ENCODE measurements at regions of chr3 and their contacts with region 1.

Region 1: GRCh38 chr3:32570421-32571191 is at the start of gene DYNC1LI1:
- DNase-seq: peak; percentile 94
- H3K4me3 Mint-ChIP-seq: peak within 1 kb of the TSS; percentile 90
- H3K27ac Mint-ChIP-seq: peak within 1 kb of the TSS; percentile 88
- H3K4me1 Mint-ChIP-seq: no peaks in the 10 kb centered on the region
- H3K27me3 Mint-ChIP-seq: no peaks in the 10 kb centered on the region
- CTCF ChIP-seq: no peak
- total RNA-seq, gene DYNC1LI1: 39.1 and 47.6 TPM in 2 replicates

Region 2: GRCh38 chr3:32480604-32481003 is 90.0 kb before region 1 on chr3:
- CTCF ChIA-PET with region 1: no interaction called
- POLR2A ChIA-PET with region 1: no interaction called
- intact Hi-C with region 1: no loop called
- DNase-seq: no peak
- H3K4me3 Mint-ChIP-seq: no peak overlapping the region
- H3K27ac Mint-ChIP-seq: peak overlapping the region; percentile 75
- H3K4me1 Mint-ChIP-seq: peaks cover 6% of the 10 kb centered on the region
- H3K27me3 Mint-ChIP-seq: no peaks in the 10 kb centered on the region
- CTCF ChIP-seq: no peak

Region 3: DNA sequence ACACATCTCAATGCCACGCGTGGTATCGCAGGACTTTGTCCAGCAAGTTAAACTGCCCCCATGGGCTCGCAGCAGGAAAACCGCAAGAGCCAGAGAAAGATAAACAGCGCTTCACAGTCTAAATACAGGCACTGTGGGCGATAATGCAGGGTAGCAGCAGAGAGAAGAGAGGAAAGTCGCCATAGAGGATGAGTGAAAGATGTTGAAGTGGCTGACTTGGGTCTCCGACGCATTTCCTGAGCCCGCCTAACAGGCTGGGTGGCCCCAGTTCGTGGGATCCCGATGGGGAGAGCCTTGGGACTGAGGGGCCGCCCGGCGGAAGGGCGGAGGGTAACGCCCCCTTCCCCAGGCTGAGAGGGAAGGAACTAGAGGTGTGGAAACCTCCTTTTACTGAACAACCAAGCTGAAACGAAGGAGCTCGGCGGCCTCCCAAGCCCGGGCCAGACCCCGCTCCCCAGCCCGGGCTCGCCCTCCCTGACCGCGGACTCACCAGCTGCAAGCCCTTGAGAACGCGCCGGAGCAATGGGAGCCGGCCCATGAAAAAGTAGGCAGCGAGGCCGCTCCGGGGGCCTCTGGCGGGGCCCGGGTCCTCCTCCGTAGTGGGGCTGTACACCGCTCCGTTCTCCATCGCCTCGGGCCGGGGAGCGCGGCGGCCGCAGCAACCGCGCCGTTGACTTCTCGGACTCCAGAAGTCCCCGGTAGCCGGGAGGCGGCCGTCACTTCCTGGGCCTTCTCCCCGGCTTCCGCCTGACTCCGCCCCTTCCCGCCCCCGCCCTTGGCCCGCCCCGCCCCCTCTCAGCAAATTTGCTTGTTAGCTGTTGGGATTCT is 68.3 kb before region 1 on chr3 and contains the start of gene CMTM6:
- CTCF ChIA-PET with region 1: no interaction called
- POLR2A ChIA-PET with region 1: interaction called, 10 read pairs
- intact Hi-C with region 1: no loop called
- DNase-seq: peak; percentile 82
- H3K4me3 Mint-ChIP-seq: peak within 1 kb of the TSS; percentile 95
- H3K27ac Mint-ChIP-seq: peak within 1 kb of the TSS; percentile 67
- H3K4me1 Mint-ChIP-seq: peaks cover 14% of the 10 kb centered on the region
- H3K27me3 Mint-ChIP-seq: no peaks in the 10 kb centered on the region
- CTCF ChIP-seq: no peak
- total RNA-seq, gene CMTM6: 27.2 and 32.2 TPM in 2 replicates

Region 4: DNA sequence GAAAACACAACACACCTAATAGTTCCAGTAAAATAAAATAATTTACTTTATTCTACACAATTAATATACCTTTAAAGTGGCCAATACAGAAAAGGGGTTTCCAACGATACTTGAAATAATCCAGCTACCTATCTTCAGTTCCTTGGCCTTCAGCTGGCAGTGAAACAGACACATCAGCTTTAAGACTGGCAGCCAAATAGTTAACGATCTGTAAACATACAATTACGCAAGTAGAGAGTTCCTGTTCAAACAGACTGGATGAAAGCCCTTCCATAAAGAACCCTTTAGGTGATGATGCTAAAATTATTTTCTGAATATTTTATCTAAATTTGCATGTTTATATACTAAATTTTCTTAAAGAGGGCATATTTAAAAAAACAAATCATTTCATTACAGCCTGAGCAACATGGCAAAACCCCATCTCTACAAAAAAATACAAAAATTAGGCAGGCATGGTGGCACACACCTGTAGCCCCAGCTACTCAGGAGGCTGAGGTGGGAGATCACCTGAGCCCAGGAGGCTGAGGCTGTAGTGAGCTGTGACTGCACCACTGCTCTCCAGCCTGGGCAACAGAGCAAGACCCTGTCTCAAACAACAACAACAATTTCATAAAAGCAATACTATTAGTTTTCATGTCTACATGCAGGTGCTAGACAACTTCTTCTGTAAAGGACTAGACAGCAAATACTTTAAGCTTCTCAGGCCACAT is 12.8 kb before region 1 on chr3:
- CTCF ChIA-PET with region 1: no interaction called
- POLR2A ChIA-PET with region 1: interaction called, 28 read pairs
- intact Hi-C with region 1: no loop called
- DNase-seq: peak; percentile 10
- H3K4me3 Mint-ChIP-seq: no peak overlapping the region
- H3K27ac Mint-ChIP-seq: no peak overlapping the region
- H3K4me1 Mint-ChIP-seq: peaks cover 6% of the 10 kb centered on the region
- H3K27me3 Mint-ChIP-seq: no peaks in the 10 kb centered on the region
- CTCF ChIP-seq: no peak

Region 5: GRCh38 chr3:32882603-32883025 is 312.0 kb after region 1 on chr3:
- CTCF ChIA-PET with region 1: no interaction called
- POLR2A ChIA-PET with region 1: no interaction called
- intact Hi-C with region 1: no loop called
- DNase-seq: no peak
- H3K4me3 Mint-ChIP-seq: no peak overlapping the region
- H3K27ac Mint-ChIP-seq: no peak overlapping the region
- H3K4me1 Mint-ChIP-seq: no peaks in the 10 kb centered on the region
- H3K27me3 Mint-ChIP-seq: no peaks in the 10 kb centered on the region
- CTCF ChIP-seq: no peak

Region 6: GRCh38 chr3:33035596-33035995 is 465.0 kb after region 1 on chr3:
- CTCF ChIA-PET with region 1: no interaction called
- POLR2A ChIA-PET with region 1: no interaction called
- intact Hi-C with region 1: no loop called
- DNase-seq: peak; percentile 37
- H3K4me3 Mint-ChIP-seq: no peak overlapping the region
- H3K27ac Mint-ChIP-seq: peak overlapping the region; percentile 2
- H3K4me1 Mint-ChIP-seq: peaks cover 16% of the 10 kb centered on the region
- H3K27me3 Mint-ChIP-seq: no peaks in the 10 kb centered on the region
- CTCF ChIP-seq: no peak

Measured in MCF 10A (cell line).